Tibial artery (tissue), 4 donors: ENCODE measurements at regions of chr5 and their contacts with region 1.

Region 1: GRCh38 chr5:55534436-55535198 is at the start of gene PLPP1:
- DNase-seq: peak; percentile 88 to 96
- H3K4me3 ChIP-seq: peak within 1 kb of the TSS; percentile 73 to 94
- H3K27ac ChIP-seq: peak within 1 kb of the TSS; percentile 97
- H3K4me1 ChIP-seq: peaks cover 0 to 48% (median 13%) of the 10 kb centered on the region in 4 donors
- H3K27me3 ChIP-seq: no peaks in the 10 kb centered on the region
- CTCF ChIP-seq: peak in 1 of 2 experiments; percentile 4

Region 2: GRCh38 chr5:55440188-55440646 is 94.4 kb before region 1 on chr5:
- intact Hi-C with region 1: loop called (anchors 10 kb)
- DNase-seq: no peak
- H3K4me3 ChIP-seq: no peak overlapping the region
- H3K27ac ChIP-seq: peak overlapping the region; percentile 77 to 88
- H3K4me1 ChIP-seq: peaks cover 0 to 87% (median 39%) of the 10 kb centered on the region in 4 donors
- H3K27me3 ChIP-seq: no peaks in the 10 kb centered on the region
- CTCF ChIP-seq: no peak